Left colon (tissue), 2 donors: ENCODE measurements at regions of chr11 and their contacts with region 1.

Region 1: DNA sequence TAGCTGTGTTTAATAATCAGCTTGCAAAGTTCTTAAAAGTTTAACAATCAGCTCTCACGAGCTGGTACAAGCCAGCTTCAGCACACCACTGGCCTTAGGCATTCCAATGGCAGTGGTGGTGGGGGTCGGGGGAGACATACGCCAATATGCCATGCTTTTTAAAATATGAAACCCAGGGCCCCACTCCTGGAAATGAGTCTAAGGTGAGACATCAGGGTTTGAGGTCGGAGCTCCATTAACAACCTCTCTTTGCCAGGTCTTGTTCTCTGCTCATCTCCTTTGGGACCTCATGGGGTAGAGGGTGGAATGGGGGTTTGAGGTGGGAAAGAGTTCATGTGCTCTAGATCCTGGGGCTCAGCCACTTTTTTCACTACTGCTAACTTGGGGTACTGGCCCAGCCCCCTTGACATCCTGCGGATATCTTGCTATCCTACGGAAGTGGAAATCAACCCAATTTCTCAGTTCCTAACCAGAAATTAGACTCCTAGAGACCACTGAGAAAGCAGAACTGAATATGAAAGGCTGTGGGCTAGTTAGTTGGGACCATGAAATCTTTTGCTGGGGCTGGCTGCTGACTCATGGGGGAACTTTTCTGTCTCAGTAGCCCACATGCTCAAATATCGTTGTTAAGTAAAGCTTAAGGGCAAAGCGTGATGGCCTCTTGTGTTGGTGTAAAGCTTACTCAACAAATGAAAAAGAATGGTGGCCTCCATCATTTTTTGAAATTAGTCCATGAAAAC is 90.1 kb downstream of the PDHX start:
- DNase-seq: no peak
- ATAC-seq: no peak

Region 2: DNA sequence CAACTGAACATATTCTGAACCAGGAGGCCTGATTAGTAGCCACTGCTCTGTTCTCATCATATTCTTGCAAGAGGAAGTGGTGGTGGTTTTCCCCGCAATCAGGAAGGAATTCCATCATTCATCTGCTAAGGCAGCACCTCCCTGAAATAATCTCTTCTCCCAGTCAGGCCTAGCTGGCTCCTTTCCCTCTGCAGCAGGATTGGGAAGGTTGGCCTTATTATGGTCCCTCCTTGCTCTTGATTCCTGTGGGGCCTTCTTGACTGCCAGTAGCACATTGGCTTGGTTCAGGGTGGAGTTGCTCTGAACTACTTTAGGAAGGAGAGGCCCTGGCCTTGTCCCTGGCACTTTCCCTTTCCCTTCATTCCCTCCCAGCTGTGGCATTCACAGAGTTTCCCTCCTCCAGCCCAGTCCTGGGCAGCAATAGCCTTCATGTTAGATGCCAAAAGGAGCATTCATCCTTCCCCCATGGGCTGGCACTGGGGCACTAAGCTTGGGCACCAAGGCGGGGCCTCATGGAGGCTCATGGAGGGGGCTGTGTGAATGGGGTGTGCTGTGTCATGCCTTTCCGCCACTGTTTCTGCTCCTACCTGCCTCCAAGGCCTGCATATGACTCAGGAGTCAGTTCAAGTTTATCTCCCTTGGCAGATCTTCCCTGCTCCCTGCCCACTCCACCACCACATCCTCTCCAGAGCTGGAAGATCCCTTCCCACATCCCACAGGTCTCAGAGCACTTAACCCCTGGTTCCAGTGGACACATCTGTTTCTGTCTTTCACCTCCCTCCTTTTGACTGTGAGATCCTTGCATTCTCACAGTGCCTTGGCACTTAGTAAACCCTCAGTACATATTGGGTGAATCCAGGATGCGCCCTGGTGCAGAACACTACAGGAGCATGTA is 104.8 kb after region 1 on chr11:
- intact Hi-C with region 1: loop called in 1 of 2 experiments (anchors 10 kb)
- DNase-seq: peak in 1 of 2 donors; percentile 38
- ATAC-seq: peak; percentile 87